ENCODE measurements at regions of chr2 and their contacts with region 1.

Region 1: GRCh38 chr2:133844214-133844892 is 276.1 kb upstream of the NCKAP5 start:
- DNase-seq: peak; percentile 93
- ATAC-seq: peak; percentile 80
- H3K4me3 ChIP-seq: no peak overlapping the region
- H3K27ac ChIP-seq: peak overlapping the region; percentile 96
- H3K4me1 ChIP-seq: peaks cover 40% of the 10 kb centered on the region
- H3K27me3 ChIP-seq: no peaks in the 10 kb centered on the region
- CTCF ChIP-seq: peak; percentile 98

Region 2: GRCh38 chr2:132416081-132416881 is 1428.1 kb before region 1 on chr2 and contains the start of gene GPR39:
- CTCF ChIA-PET with region 1: no interaction called
- POLR2A ChIA-PET with region 1: no interaction called
- intact Hi-C with region 1: loop called (anchors 10 kb)
- DNase-seq: peak; percentile 99
- ATAC-seq: peak; percentile 77
- H3K4me3 ChIP-seq: peak within 1 kb of the TSS; percentile 88
- H3K27ac ChIP-seq: peak within 1 kb of the TSS; percentile 93
- H3K4me1 ChIP-seq: peaks cover 49% of the 10 kb centered on the region
- H3K27me3 ChIP-seq: no peaks in the 10 kb centered on the region
- CTCF ChIP-seq: no peak
- total RNA-seq, gene GPR39: 34.8 and 43.2 TPM in 2 replicates

Region 3: DNA sequence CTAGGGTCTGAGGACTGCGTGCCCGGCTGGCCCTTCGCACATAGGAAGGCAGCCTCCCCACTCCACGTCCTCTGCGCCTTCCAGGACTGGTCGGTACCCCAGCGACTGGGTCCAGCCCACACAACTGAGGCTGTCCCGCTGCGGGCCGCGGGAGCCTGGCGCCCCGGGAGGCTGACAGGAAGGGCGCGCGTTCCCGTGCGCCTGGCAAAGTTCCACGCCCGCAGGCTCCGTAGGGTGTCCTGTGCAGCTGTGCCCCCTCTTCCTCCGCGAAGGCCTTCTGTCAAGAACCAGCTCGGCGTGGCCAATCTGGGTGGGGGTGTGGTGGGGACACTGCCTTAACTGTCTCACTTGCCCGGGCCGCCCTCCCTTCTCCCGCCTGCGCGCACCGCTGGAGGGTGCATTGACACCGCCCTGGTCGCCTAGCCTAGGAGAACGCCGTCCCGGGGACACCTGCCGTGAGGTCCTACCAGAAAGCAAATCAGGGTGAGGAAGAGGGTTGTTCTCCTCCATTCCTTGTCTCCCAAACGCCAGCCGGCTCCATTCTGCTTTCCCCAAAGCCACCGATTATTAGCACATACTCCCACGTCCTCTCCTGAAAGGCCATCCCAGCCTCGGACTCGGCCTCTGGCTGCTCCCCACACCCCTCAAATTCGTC is 1173.7 kb before region 1 on chr2:
- CTCF ChIA-PET with region 1: no interaction called
- POLR2A ChIA-PET with region 1: no interaction called
- intact Hi-C with region 1: loop called (anchors 10 kb)
- DNase-seq: peak; percentile 54
- ATAC-seq: peak; percentile 61
- H3K4me3 ChIP-seq: peak overlapping the region; percentile 78
- H3K27ac ChIP-seq: peak overlapping the region; percentile 13; the same call in 1 of the 2 replicates
- H3K4me1 ChIP-seq: peaks cover 24% of the 10 kb centered on the region
- H3K27me3 ChIP-seq: no peaks in the 10 kb centered on the region
- CTCF ChIP-seq: peak; percentile 26; the same call in 1 of the 2 replicates

Region 4: GRCh38 chr2:133266041-133266925 is 578.1 kb before region 1 on chr2:
- CTCF ChIA-PET with region 1: no interaction called
- POLR2A ChIA-PET with region 1: no interaction called
- intact Hi-C with region 1: loop called (anchors 1 kb)
- DNase-seq: peak; percentile 28
- ATAC-seq: peak; percentile 29
- H3K4me3 ChIP-seq: peak overlapping the region; percentile 76
- H3K27ac ChIP-seq: peak overlapping the region; percentile 38
- H3K4me1 ChIP-seq: peaks cover 47% of the 10 kb centered on the region
- H3K27me3 ChIP-seq: no peaks in the 10 kb centered on the region
- CTCF ChIP-seq: peak; percentile 54; the same call in 1 of the 2 replicates

Region 5: DNA sequence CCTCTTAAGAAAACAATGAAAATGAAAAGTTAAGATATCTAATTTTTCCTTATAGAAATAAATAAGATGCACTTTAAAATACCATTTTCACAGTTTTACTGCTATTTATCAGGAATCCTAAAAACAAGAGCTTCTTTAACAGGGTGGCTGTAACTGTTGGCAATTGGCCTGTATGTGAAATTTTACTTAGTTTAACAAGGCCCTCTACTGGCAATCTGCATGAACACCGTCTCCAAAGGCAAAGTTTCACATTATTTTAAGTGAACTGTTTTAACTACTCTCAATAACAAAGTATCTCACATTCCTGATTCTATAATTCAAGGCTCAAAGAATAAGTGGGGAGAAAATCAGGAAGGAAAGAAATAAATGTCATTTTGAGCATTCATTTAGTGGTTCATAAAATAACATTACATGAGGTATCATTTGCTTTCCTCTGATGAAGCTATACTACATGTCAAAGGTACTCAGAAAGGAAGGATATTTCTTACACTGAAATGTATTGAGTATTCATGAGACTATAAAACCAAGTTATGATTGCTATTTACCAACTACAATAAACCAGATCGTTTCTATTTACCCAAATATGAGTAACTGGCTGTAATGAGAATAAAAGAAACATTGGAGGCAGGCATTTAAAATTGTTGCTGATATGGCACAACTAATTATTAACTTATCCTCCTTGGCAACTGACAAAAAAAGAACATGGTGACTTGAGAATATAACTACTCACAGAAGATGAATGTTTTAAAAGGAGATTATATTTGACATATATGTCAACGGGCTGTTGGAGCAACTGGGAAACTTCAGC is 283.1 kb before region 1 on chr2:
- CTCF ChIA-PET with region 1: interaction called, 10 read pairs
- POLR2A ChIA-PET with region 1: no interaction called
- intact Hi-C with region 1: loop called (anchors 2 kb)
- DNase-seq: peak; percentile 81
- ATAC-seq: peak; percentile 91
- H3K4me3 ChIP-seq: no peak overlapping the region
- H3K27ac ChIP-seq: peak overlapping the region; percentile 67
- H3K4me1 ChIP-seq: peaks cover 27% of the 10 kb centered on the region
- H3K27me3 ChIP-seq: no peaks in the 10 kb centered on the region
- CTCF ChIP-seq: peak; percentile 90

Region 6: GRCh38 chr2:133641497-133641896 is 202.9 kb before region 1 on chr2:
- CTCF ChIA-PET with region 1: no interaction called
- POLR2A ChIA-PET with region 1: no interaction called
- intact Hi-C with region 1: loop called (anchors 2 kb)
- DNase-seq: peak; percentile 98
- ATAC-seq: peak; percentile 94
- H3K4me3 ChIP-seq: peak overlapping the region; percentile 46; the same call in 1 of the 2 replicates
- H3K27ac ChIP-seq: peak overlapping the region; percentile 72
- H3K4me1 ChIP-seq: peaks cover 33% of the 10 kb centered on the region
- H3K27me3 ChIP-seq: no peaks in the 10 kb centered on the region
- CTCF ChIP-seq: peak; percentile 80

Region 7: DNA sequence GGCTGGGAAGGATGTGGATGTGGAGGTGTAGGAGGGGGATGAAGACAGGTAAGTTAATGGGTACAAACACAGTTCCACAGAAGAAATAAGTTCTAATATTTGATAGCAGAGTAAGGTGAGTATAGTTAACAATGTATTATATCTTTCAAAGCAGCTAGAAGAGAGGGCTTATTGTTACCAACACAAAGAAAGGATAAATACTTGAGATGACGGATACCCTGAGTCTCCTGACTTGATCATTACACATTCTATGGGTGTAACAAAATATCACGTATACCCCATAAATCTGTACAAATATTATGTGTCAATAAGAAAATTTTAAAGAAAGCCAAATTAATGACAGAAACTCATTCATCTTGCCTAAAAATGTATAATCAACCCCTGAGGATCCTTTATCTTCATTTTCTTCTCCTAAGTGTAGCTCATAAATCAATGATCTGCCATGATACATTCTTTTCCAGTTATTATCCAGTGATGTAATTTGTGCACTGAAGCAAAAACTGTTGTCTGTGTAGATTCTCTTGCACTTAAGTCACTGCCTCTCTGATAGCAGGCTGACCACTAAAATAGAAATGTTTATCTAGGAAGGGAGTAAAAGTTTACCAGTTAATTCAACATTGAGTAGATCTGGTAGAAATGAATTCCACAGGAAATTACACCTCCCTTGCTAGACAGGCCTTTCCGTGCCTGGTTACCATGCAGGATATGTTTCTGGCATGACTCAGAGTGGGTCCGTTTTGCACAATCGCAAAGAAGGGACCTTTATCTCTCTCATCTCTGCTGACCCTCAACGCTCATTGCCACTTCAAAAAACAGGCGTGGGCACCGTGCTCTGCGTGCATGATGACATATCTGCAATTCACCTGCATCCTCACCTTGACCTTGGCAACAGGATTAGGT is 26.4 kb before region 1 on chr2:
- CTCF ChIA-PET with region 1: no interaction called
- POLR2A ChIA-PET with region 1: no interaction called
- intact Hi-C with region 1: loop called (anchors 1 kb)
- DNase-seq: peak; percentile 97
- ATAC-seq: peak; percentile 84
- H3K4me3 ChIP-seq: no peak overlapping the region
- H3K27ac ChIP-seq: peak overlapping the region; percentile 95
- H3K4me1 ChIP-seq: peaks cover 64% of the 10 kb centered on the region
- H3K27me3 ChIP-seq: no peaks in the 10 kb centered on the region
- CTCF ChIP-seq: no peak